ENCODE measurements at regions of chr17 and their contacts with region 1.

Region 1: GRCh38 chr17:7323731-7324437 is 5.3 kb downstream of the NEURL4 start:
- DNase-seq: peak; percentile 73
- H3K4me3 Mint-ChIP-seq: no peak overlapping the region
- H3K27ac Mint-ChIP-seq: no peak overlapping the region
- H3K4me1 Mint-ChIP-seq: peaks cover 25% of the 10 kb centered on the region
- H3K27me3 Mint-ChIP-seq: no peaks in the 10 kb centered on the region

Region 2: GRCh38 chr17:7336240-7337175 is 12.6 kb after region 1 on chr17 and contains the start of gene ACAP1:
- CTCF ChIA-PET with region 1: interaction called, 42 read pairs
- intact Hi-C with region 1: no loop called
- DNase-seq: peak; percentile 95
- H3K4me3 Mint-ChIP-seq: peak within 1 kb of the TSS; percentile 96
- H3K27ac Mint-ChIP-seq: peak within 1 kb of the TSS; percentile 98
- H3K4me1 Mint-ChIP-seq: peaks cover 59% of the 10 kb centered on the region
- H3K27me3 Mint-ChIP-seq: no peaks in the 10 kb centered on the region
- total RNA-seq, gene ACAP1: 309 to 320 TPM